A549 (cell line): ENCODE measurements at regions of chr6 and their contacts with region 1.

Region 1: GRCh38 chr6:90478789-90479602 is 107.9 kb downstream of the MAP3K7 start:
- DNase-seq: peak; percentile 86 to 87
- ATAC-seq: peak; percentile 99 to 100
- H3K4me3 ChIP-seq: no peak overlapping the region
- H3K27ac ChIP-seq: peak overlapping the region in 1 of 2 experiments; percentile 3; a peak in 1 of 6 replicates
- H3K4me1 ChIP-seq: peaks cover 7% of the 10 kb centered on the region; the same call in 2 of the 3 replicates
- CTCF ChIP-seq: peak; percentile 79
- EP300 ChIP-seq: no peak
- POLR2A ChIP-seq: no peak
- RAD21 ChIP-seq: peak; percentile 93 to 94

Region 2: DNA sequence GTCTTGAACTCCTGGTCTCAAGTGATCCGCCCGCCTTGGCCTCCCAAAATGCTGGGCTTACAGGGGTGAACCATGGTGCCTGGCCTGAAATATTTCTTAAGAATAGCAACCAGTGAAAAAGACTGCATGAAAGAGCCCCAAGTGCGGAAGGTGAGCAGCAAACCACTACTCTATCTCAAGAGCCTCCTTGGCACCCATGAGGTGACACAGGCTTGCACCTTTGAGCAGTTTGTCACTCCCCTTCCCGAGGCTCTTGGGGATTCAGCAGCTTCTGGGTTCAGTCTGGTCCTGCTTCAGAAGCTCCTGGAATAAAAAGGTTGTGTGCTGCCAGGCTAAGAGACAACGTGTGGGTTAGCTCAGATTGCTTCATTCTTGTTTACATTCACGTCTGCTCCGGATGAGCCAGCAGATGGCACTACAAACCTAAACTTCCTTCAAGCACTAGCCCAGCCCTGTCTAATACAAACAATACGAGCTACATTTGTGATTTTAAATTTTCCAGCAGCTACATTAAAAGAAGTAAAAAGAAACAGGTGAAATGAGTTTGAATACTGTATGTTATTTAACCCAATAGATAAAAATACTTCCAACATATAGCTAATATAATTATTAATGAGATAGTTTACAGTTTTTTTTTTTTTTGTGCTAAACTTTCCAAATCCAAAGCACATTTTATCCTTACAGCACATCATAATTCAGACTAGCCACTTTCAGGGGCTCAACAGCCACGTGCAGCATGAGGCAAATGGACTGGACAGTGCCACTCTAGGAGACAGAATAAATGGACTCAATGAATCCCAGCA is 538.6 kb before region 1 on chr6:
- CTCF ChIA-PET with region 1: interaction called, 62 read pairs
- POLR2A ChIA-PET with region 1: interaction called, 8 read pairs
- DNase-seq: peak; percentile 70 to 75
- ATAC-seq: peak; percentile 98 to 99
- H3K4me3 ChIP-seq: no peak overlapping the region
- H3K27ac ChIP-seq: peak overlapping the region in 1 of 2 experiments; percentile 27; a peak in 1 of 6 replicates
- H3K4me1 ChIP-seq: no peaks in the 10 kb centered on the region; the same call in 2 of the 3 replicates
- CTCF ChIP-seq: peak; percentile 75
- EP300 ChIP-seq: no peak
- POLR2A ChIP-seq: no peak
- RAD21 ChIP-seq: peak; percentile 87

Region 3: DNA sequence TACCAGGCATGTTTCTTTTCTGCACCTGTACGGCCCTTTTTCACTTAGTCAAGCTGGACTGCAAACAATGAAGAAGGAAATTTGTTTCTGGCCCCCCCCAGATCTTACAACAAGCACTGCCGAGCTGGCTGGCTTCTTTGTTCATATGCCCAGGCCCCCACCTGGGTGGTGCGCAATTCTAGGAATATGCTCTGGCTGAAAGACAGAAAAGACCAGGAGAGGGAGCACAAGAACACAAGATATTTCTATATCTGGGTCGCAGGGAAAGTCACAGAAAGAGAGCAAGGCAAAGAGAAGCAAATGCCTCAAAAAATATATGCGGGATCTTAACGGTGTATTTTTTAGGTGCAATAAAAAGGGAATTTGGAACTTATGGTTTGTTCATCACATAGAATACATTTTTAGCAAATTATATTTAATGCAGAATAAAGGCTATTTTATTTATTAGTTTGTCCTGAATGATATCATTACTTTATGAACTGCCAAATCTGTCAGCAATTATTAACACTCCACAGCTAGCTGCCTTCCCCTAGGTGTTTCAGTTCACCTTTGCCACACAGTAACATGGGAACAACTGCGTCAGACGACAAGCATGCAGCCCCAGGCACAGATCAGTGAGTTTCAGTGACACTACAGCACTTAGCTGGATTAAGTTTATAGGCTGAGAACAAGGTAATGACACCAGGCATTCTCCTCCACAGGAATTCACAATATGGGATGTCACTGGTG is 508.2 kb before region 1 on chr6:
- CTCF ChIA-PET with region 1: interaction called, 14 read pairs
- POLR2A ChIA-PET with region 1: no interaction called
- DNase-seq: peak; percentile 12 to 33
- ATAC-seq: peak; percentile 86 to 90
- H3K4me3 ChIP-seq: no peak overlapping the region
- H3K27ac ChIP-seq: no peak overlapping the region
- H3K4me1 ChIP-seq: no peaks in the 10 kb centered on the region
- CTCF ChIP-seq: peak; percentile 47
- EP300 ChIP-seq: no peak
- POLR2A ChIP-seq: no peak
- RAD21 ChIP-seq: peak; percentile 60 to 70

Region 4: DNA sequence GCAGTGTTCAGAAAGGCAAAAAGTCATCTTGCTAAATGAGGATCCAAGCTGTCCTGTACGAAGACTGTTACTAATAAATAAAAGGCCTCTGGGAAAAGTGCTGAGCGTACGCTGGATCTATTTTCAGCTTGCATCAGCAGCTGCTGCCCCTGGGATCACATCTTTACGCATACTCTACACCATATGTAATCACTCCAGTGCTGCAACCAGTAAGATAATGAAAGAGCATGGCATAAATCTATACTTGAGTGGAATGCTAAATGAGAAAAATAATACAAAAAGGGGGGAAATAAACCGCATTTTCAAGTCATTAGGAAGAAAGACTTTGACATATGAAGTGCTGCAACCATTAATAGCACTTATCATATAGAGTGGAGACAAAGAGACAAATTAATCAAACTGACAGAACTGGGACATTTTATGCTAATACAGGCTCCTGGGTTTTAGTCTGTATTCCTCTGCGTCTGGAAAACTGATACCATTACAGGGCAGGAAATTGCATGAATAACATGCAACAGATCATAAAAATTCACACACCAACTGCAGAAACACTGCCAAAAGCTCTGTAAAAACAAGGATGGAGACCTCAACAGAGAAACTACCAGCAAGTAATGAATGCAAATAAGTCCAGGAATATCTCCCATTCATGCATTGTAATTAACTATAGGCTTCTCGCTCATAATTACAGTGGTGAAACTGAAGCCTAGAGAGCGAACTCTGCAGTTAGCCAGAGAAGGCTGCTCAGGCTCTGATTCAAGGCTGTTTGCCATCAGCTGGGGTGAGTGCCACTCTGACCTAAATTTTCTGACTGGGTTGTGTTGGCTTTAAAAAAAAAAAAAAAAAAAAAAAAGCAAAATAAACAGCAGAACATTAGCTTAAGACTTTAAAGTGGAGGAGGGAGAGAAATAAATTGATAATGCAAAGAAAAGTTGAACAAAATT is 500.9 kb before region 1 on chr6:
- CTCF ChIA-PET with region 1: interaction called, 10 read pairs
- POLR2A ChIA-PET with region 1: no interaction called
- DNase-seq: no peak
- ATAC-seq: no peak
- H3K4me3 ChIP-seq: no peak overlapping the region
- H3K27ac ChIP-seq: no peak overlapping the region
- H3K4me1 ChIP-seq: no peaks in the 10 kb centered on the region
- CTCF ChIP-seq: no peak
- EP300 ChIP-seq: no peak
- POLR2A ChIP-seq: no peak
- RAD21 ChIP-seq: no peak

Region 5: GRCh38 chr6:90286884-90287488 is 192.0 kb before region 1 on chr6:
- CTCF ChIA-PET with region 1: interaction called, 12 read pairs
- POLR2A ChIA-PET with region 1: no interaction called
- DNase-seq: peak; percentile 25 to 65
- ATAC-seq: peak in 1 of 2 experiments; percentile 64; a peak in 3 of 6 replicates
- H3K4me3 ChIP-seq: no peak overlapping the region
- H3K27ac ChIP-seq: no peak overlapping the region
- H3K4me1 ChIP-seq: peaks cover 23% of the 10 kb centered on the region
- CTCF ChIP-seq: peak; percentile 35; the same call in 2 of the 3 replicates
- EP300 ChIP-seq: no peak
- POLR2A ChIP-seq: no peak
- RAD21 ChIP-seq: peak; percentile 48 to 73

Region 6: GRCh38 chr6:90490030-90490716 is 11.2 kb after region 1 on chr6:
- CTCF ChIA-PET with region 1: interaction called, 10 read pairs
- POLR2A ChIA-PET with region 1: no interaction called
- DNase-seq: no peak
- ATAC-seq: no peak
- H3K4me3 ChIP-seq: no peak overlapping the region
- H3K27ac ChIP-seq: no peak overlapping the region
- H3K4me1 ChIP-seq: no peaks in the 10 kb centered on the region
- CTCF ChIP-seq: no peak
- EP300 ChIP-seq: no peak
- POLR2A ChIP-seq: no peak
- RAD21 ChIP-seq: no peak